ENCODE measurements at regions of chrX and their contacts with region 1.

Region 1: DNA sequence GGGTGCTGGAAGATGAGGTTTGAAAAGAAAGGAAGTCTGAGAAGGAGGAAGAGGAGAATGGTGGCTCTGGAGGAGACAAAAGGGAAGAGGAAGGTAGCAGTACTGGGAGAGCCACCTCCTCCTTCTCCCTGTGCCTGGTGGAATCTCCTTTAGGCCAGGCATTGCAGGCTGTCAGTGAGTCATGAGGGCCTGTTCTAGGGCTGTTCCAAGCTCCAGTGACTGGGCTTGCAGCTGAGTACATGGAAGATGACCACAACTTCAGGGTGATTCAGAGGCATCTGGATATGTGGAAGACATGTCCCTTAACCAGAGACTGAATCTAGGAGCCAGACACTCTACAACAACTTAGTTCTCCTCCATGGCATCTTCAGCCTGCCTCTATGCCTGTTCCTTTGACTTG is 107.8 kb downstream of the EFNB1 start:
- DNase-seq: peak; percentile 88
- H3K4me3 ChIP-seq: no peak overlapping the region
- H3K27ac ChIP-seq: peak overlapping the region; percentile 50
- H3K4me1 ChIP-seq: peaks cover 28% of the 10 kb centered on the region
- H3K27me3 ChIP-seq: no peaks in the 10 kb centered on the region
- CTCF ChIP-seq: no peak

Region 2: GRCh38 chrX:68894513-68895340 is 41.9 kb before region 1 on chrX:
- CTCF ChIA-PET with region 1: no interaction called
- dilution Hi-C with region 1: no loop called
- in situ Hi-C with region 1: no loop called
- intact Hi-C with region 1: loop called (anchors 5 kb)
- DNase-seq: peak; percentile 33
- H3K4me3 ChIP-seq: no peak overlapping the region
- H3K27ac ChIP-seq: peak overlapping the region; percentile 37
- H3K4me1 ChIP-seq: peaks cover 18% of the 10 kb centered on the region
- H3K27me3 ChIP-seq: no peaks in the 10 kb centered on the region
- CTCF ChIP-seq: no peak

Region 3: DNA sequence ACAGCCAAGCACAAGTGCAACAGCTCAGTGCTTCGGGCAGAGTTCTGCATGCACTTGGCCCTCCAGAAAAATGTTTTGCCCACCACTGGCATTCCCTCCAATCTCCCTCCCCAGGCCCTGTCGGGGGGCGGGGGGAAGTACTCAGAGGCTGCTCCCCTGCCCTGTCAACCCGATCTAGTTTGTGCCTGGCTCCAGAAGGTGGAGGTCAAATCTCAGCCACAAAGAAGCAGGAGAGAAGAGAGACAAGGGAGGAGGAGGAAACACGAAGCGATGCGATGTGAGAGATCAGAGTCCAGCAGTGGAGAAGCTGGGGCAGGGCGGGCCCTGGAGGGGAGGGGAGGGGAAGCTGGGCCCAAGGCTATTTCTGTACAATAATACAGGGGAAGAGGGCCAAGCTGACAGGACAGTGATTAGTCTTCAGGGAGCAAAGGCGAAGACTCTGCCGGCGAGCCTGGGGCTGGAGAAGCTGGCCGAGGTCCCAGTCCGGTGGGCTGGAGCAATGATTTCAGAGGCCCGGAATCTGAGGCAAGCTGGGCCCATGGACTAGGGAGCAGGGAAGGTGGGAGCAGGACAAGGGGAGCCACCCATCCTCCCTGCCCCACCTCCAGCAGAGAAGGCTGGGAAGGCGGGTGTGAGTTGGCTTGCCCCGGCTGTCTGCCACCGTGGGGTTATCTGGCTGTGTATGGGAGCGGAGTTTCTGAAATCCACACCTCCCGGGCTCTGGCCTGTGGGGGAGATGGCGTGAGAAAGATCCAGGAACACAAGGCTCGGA is 59.4 kb after region 1 on chrX:
- CTCF ChIA-PET with region 1: no interaction called
- dilution Hi-C with region 1: no loop called
- in situ Hi-C with region 1: no loop called
- intact Hi-C with region 1: loop called (anchors 5 kb)
- DNase-seq: peak; percentile 35
- H3K4me3 ChIP-seq: no peak overlapping the region
- H3K27ac ChIP-seq: no peak overlapping the region
- H3K4me1 ChIP-seq: peaks cover 37% of the 10 kb centered on the region
- H3K27me3 ChIP-seq: no peaks in the 10 kb centered on the region
- CTCF ChIP-seq: no peak